ENCODE measurements at regions of chrX and their contacts with region 1.

Region 1: GRCh38 chrX:153609917-153610428 is 11.0 kb upstream of the CCNQ start:
- DNase-seq: peak; percentile 75 to 87 (median 83)
- H3K4me3 ChIP-seq: peak overlapping the region; percentile 41
- H3K27ac ChIP-seq: peak overlapping the region in 1 of 2 donors; percentile 25
- H3K4me1 ChIP-seq: no peaks in the 10 kb centered on the region
- H3K27me3 ChIP-seq: no peaks in the 10 kb centered on the region
- CTCF ChIP-seq: peak; percentile 43 to 68 (median 63)
- EP300 ChIP-seq: no peak
- POLR2A ChIP-seq: no peak

Region 2: DNA sequence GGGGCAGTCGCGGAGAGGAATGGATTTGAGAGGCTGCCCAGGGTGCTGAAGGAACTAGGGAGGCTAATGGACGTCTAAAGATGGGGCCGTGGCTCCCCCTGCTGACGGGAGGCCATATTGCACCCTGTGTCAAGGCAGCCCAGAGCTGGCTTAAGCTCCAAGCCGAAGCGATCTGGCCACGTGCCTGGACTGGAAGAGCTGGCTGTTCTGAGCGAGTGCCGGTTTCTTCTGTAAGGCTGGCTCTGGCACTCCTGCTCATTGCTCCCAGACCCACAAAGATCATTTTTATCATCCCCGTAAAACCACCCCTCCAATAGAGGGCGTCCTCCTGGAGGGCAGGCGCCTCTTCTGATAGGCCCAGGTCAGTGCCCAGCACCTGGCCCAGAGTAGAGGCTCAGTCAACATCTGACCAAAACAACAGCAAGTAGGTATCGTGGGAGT is 58.0 kb after region 1 on chrX:
- intact Hi-C with region 1: loop called in 3 of 4 experiments (anchors 5 kb)
- DNase-seq: peak; percentile 87 to 95 (median 91)
- H3K4me3 ChIP-seq: no peak overlapping the region
- H3K27ac ChIP-seq: no peak overlapping the region
- H3K4me1 ChIP-seq: no peaks in the 10 kb centered on the region
- H3K27me3 ChIP-seq: no peaks in the 10 kb centered on the region
- CTCF ChIP-seq: peak; percentile 53 to 79 (median 67)
- EP300 ChIP-seq: no peak
- POLR2A ChIP-seq: no peak